GM18951 (cell line): ENCODE measurements at regions of chr1 and their contacts with region 1.

Region 1: DNA sequence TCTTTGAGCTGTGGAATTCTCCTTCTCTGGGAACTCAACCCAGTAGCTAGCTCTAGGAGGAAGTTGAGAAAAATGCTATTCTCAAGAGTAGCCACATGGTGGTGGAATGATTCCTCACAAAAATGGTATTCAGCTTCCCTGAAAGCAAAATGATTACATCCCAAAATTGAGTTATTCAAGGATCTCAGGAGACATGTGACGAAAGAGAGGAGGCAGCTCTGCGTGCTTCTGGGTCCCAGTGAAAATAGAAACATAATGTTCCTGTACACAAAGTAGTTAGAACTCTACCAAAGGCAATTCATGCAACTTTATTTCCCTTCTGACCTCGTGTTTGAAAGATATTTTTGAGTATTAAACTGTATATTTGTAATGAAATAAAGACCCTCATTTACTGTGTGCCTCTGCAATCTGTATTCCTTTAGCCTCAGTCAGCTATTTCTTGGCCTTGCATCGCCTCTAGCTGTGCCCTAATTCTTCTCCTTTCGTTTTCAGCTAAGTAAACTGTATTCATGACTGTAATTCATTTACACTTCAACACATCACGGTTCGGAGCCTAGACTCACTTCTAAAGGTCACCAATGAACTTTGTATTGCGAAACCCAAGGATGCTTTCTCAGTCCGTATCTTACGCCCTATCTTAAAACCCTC is 167.3 kb downstream of the FASLG start:
- POLR2A ChIP-seq: no peak

Region 2: DNA sequence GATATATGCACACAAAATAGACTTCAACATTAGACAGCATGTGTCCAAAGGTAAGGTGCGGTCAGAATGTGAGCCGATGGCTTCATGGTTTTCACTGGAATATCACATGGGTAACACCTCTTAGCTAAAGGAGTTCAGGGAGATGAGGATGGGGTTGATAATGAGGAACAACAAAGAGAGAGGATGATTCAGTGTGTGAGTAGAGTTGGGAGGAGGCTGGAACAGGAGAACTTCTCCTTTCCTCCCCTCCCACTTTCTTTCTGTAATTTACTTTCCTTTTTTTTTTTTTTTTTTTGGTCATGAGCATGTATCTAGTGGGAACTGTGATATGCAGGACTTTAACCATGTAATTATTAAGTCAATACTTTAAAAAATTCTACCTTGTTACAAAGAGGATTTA is 68.0 kb before region 1 on chr1:
- in situ Hi-C with region 1: loop called (anchors 10 kb)
- POLR2A ChIP-seq: no peak